Colonic mucosa (tissue), 4 donors: ENCODE measurements at regions of chr7 and their contacts with region 1.

Region 1: GRCh38 chr7:107890962-107891635 is at the start of gene DLD:
- DNase-seq: peak; percentile 95
- H3K4me3 ChIP-seq: peak within 1 kb of the TSS; percentile 59
- H3K27ac ChIP-seq: peak within 1 kb of the TSS; percentile 96
- H3K4me1 ChIP-seq: peaks cover 3% of the 10 kb centered on the region
- H3K27me3 ChIP-seq: no peaks in the 10 kb centered on the region
- CTCF ChIP-seq: no peak
- total RNA-seq, gene DLD: 119 to 183 TPM

Region 2: DNA sequence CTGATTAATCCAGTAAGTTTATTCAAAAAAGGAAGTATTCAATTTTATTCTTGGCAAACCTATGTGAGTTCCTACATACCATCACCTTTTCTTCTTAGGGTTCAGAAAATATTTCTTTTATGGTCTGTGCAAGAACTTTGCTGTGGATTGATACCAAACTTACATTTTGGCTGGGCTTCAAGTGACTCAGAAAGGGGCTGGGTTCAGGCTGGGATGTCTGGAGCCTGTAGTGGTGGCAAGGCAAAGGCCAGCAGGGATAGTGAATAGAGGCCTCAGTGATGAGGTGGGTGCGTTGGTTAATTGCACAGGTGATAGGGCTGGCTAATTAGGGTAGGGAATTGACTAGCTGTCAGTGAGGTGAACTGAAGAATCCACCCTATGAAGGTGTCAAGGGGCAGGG is 1974.5 kb before region 1 on chr7:
- intact Hi-C with region 1: no loop called
- DNase-seq: no peak
- H3K4me3 ChIP-seq: no peak overlapping the region
- H3K27ac ChIP-seq: no peak overlapping the region
- H3K4me1 ChIP-seq: no peaks in the 10 kb centered on the region
- H3K27me3 ChIP-seq: no peaks in the 10 kb centered on the region
- CTCF ChIP-seq: no peak

Region 3: DNA sequence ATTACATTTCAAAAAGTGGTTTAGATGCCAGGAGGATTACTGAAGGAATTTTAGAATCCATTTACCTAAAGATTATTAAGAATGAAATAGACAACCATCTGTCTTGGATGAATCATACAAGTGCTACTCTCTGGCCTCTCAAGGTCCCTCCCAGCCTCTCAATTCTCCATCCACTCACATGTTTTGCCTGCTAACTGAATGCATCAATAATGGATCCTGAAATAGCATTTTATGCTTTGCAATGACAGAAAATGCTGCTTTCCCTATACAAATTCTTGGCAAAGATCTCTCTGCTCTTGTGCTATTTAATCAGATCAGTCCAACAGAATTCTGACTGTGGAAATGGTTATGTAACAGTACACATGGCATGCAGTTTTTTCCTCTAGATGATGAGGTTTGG is 654.2 kb before region 1 on chr7:
- intact Hi-C with region 1: no loop called
- DNase-seq: no peak
- H3K4me3 ChIP-seq: no peak overlapping the region
- H3K27ac ChIP-seq: no peak overlapping the region
- H3K4me1 ChIP-seq: no peaks in the 10 kb centered on the region
- H3K27me3 ChIP-seq: no peaks in the 10 kb centered on the region
- CTCF ChIP-seq: no peak

Region 4: DNA sequence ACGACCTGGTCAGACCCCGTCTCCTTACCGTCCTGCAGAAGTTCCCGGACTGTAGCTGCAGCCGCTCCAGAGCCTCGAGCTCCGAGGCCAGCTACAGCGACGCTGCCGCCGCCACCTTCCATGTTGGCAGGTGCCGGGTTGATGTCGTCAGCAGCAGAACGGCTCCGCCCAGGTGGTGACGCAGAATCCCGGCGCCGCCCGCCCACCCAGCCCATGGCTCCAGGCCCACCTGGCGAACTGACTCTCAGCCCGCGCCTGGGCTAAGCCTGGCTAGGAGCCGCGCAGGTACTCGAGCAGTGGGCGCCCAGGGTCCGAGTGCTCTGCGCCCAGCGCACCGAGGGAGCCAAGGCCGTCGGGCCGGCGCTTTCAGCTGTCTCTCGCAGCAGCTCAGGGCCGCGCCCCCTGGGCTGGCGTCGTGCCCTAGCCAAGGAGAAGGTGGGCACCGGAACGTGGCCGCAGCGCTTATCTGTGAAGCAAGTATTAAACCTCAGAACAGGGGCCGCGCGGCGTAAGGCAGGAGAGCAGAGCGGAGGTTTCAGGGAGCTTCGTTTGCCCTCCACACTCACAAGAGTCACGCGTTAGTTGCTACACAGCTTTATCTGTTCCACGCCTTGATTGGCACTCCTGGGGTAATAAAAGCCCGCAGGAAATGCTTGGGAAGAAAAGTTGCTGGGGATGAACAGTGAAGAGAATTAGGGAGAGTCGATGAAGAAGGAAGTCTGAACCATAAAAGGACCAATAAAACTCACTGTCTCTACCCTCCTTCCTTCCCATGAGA is 327.1 kb before region 1 on chr7 and contains the starts of genes COG5 and DUS4L:
- intact Hi-C with region 1: loop called (anchors 10 kb)
- DNase-seq: peak; percentile 87
- H3K4me3 ChIP-seq: peak within 1 kb of the TSS; percentile 78
- H3K27ac ChIP-seq: peak within 1 kb of the TSS; percentile 95
- H3K4me1 ChIP-seq: no peaks in the 10 kb centered on the region
- H3K27me3 ChIP-seq: no peaks in the 10 kb centered on the region
- CTCF ChIP-seq: no peak
- total RNA-seq, gene COG5: 43.1 to 46.8 TPM
- total RNA-seq, gene DUS4L: 3.7 to 5.7 TPM